ENCODE measurements at regions of chr4 and their contacts with region 1.

Region 1: DNA sequence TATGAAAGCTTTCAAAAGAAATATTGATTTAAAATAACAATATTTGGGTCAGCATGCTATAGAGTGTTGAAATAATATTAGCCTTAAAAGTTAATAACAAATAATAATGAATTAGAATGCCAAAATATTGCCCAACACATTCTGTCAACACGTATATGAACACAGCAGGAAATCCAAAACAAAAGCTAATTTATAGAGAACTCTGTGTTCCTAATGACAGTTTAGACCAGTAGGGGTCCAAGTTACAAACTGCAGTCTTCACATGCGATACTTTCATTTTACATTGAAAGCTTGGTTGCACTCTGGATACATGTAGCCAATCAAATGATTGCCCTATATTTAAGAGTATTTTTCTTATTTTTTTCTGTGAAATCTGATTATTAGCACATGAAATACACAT is 274.4 kb downstream of the DCTD start:
- DNase-seq: no peak
- ATAC-seq: no peak
- H3K4me3 ChIP-seq: no peak overlapping the region
- H3K27ac ChIP-seq: no peak overlapping the region
- H3K4me1 ChIP-seq: peaks cover 0 to 12% (median 0%) of the 10 kb centered on the region in 12 donors
- H3K27me3 ChIP-seq: no peaks in the 10 kb centered on the region
- CTCF ChIP-seq: peak in 1 of 12 donors; percentile 5
- POLR2A ChIP-seq: no peak

Region 2: DNA sequence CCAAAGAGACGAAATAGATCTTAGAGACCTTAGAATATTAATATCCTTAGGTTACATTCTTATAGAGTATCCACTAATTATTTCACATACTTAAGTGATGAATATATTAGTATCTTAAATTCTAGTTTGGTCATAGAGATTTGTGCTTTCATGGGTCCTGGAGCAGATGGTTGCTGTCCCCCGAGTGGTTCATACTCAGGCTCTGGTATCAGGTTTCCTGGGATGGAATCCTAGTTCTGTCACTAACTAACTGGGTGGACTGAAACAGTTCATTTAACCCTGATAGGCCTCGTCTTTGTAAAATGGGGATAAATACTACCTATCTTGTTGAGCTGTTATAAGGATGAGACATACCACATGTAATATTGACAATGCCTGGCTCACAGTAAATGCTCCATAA is 135.0 kb before region 1 on chr4:
- intact Hi-C with region 1: loop called in 1 of 10 experiments (anchors 10 kb)
- DNase-seq: no peak
- ATAC-seq: no peak
- H3K4me3 ChIP-seq: no peak overlapping the region
- H3K27ac ChIP-seq: no peak overlapping the region
- H3K4me1 ChIP-seq: no peaks in the 10 kb centered on the region
- H3K27me3 ChIP-seq: no peaks in the 10 kb centered on the region
- CTCF ChIP-seq: no peak
- POLR2A ChIP-seq: no peak

Region 3: DNA sequence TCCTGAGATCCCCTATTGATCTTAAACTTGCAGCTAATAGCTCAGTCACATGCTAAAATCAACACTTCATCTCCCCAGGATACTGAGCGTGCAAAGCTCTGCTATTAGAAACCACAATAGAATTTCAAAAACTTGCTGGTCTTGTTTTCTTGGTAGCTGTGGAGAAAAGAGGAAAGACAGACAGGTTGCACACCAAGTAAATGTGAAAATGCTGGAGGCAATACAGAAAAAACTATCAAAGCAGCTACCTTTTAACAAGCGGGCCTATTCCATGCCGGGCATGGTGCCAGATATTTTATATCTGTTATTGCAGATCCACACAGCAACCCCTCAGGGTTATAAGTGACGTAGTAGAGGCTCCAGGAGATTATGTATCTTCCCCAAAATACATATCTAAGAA is 102.4 kb after region 1 on chr4:
- intact Hi-C with region 1: loop called in 1 of 10 experiments (anchors 5 kb)
- DNase-seq: no peak
- ATAC-seq: no peak
- H3K4me3 ChIP-seq: no peak overlapping the region
- H3K27ac ChIP-seq: no peak overlapping the region
- H3K4me1 ChIP-seq: peaks cover 0 to 13% (median 1%) of the 10 kb centered on the region in 12 donors
- H3K27me3 ChIP-seq: no peaks in the 10 kb centered on the region
- CTCF ChIP-seq: no peak
- POLR2A ChIP-seq: no peak